Naive thymus-derived CD4-positive, alpha-beta T cell (primary cell): ENCODE measurements at regions of chr1 and their contacts with region 1.

Region 1: GRCh38 chr1:230167419-230167852 is 100.4 kb downstream of the GALNT2 start:
- DNase-seq: peak in 8 of 9 donors; percentile 21 to 50 (median 33)
- ATAC-seq: peak; percentile 77
- H3K4me3 ChIP-seq: no peak overlapping the region
- H3K4me3 Mint-ChIP-seq: peak overlapping the region in 2 of 10 donors; percentile 7 to 36
- H3K27ac ChIP-seq: no peak overlapping the region
- H3K27ac Mint-ChIP-seq: peak overlapping the region in 1 of 9 donors; percentile 48
- H3K4me1 ChIP-seq: no peaks in the 10 kb centered on the region
- H3K4me1 Mint-ChIP-seq: peaks cover 23 to 34% (median 31%) of the 10 kb centered on the region in 7 donors
- H3K27me3 ChIP-seq: no peaks in the 10 kb centered on the region
- H3K27me3 Mint-ChIP-seq: no peaks in the 10 kb centered on the region

Region 2: DNA sequence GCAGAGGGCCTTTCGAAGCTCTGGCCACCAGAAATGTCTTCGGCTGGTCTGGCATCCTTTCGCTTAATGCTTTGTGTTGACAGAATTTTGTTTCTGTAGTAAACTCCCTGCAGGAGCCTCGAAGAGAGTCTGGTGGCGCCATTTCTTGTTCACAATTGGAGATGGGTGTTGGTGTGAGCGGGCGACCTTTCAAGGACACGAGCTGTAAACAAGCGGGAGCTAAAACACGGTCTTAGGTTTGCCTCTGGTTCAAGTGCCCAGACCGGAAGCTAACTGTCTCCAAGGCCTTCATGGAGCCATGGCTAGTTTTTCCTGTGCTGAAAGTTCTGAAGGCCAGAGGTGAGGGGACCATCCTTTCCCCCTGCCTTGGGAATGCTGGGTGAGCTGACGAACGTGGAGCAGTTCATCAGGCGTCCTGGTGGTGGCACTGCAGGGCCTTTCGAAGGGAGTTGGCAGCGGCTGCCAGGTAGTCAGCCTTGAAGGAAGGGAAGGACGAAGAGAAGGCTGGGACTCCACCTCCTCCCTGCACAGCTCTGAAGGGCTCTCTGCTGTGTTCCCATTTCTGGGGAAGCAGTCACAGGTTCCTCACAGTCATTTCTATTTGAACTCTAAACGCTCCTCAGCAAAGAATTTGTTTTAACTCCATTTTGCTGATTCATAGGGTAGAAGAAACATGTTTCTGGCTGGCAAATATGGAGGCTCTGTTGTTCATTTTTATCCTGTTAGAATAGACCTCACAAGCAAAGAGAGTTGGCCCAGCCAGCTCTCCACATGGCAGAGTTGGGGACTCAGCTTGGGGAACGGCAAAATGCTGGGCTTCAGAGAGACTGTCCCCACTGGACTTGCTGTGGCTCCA is 506.2 kb before region 1 on chr1:
- CTCF ChIA-PET with region 1: interaction called, 40 read pairs
- POLR2A ChIA-PET with region 1: no interaction called
- intact Hi-C with region 1: loop called (anchors 1 kb)
- DNase-seq: peak; percentile 38 to 72 (median 67)
- ATAC-seq: peak; percentile 87
- H3K4me3 ChIP-seq: no peak overlapping the region
- H3K4me3 Mint-ChIP-seq: no peak overlapping the region
- H3K27ac ChIP-seq: no peak overlapping the region
- H3K27ac Mint-ChIP-seq: peak overlapping the region in 3 of 9 donors; percentile 8 to 80 (median 66)
- H3K4me1 ChIP-seq: peaks cover 13% of the 10 kb centered on the region in 2 donors
- H3K4me1 Mint-ChIP-seq: peaks cover 0 to 11% (median 5%) of the 10 kb centered on the region in 7 donors
- H3K27me3 ChIP-seq: no peaks in the 10 kb centered on the region
- H3K27me3 Mint-ChIP-seq: no peaks in the 10 kb centered on the region

Region 3: GRCh38 chr1:229856009-229856650 is 311.3 kb before region 1 on chr1:
- CTCF ChIA-PET with region 1: interaction called, 3 read pairs
- POLR2A ChIA-PET with region 1: no interaction called
- intact Hi-C with region 1: loop called in 1 of 2 experiments (anchors 10 kb)
- DNase-seq: peak in 5 of 9 donors; percentile 8 to 45 (median 30)
- ATAC-seq: peak; percentile 81
- H3K4me3 ChIP-seq: peak overlapping the region; percentile 40
- H3K4me3 Mint-ChIP-seq: peak overlapping the region; percentile 82 to 92 (median 90)
- H3K27ac ChIP-seq: peak overlapping the region; percentile 28
- H3K27ac Mint-ChIP-seq: peak overlapping the region; percentile 23 to 95 (median 83)
- H3K4me1 ChIP-seq: no peaks in the 10 kb centered on the region
- H3K4me1 Mint-ChIP-seq: peaks cover 5 to 14% (median 10%) of the 10 kb centered on the region in 7 donors
- H3K27me3 ChIP-seq: no peaks in the 10 kb centered on the region
- H3K27me3 Mint-ChIP-seq: peaks cover 0 to 5% (median 0%) of the 10 kb centered on the region in 5 donors

Region 4: GRCh38 chr1:229979993-229980392 is 187.4 kb before region 1 on chr1:
- CTCF ChIA-PET with region 1: no interaction called
- POLR2A ChIA-PET with region 1: no interaction called
- intact Hi-C with region 1: loop called (anchors 10 kb)
- DNase-seq: no peak
- ATAC-seq: no peak
- H3K4me3 ChIP-seq: no peak overlapping the region
- H3K4me3 Mint-ChIP-seq: no peak overlapping the region
- H3K27ac ChIP-seq: no peak overlapping the region
- H3K27ac Mint-ChIP-seq: no peak overlapping the region
- H3K4me1 ChIP-seq: no peaks in the 10 kb centered on the region
- H3K4me1 Mint-ChIP-seq: no peaks in the 10 kb centered on the region
- H3K27me3 ChIP-seq: no peaks in the 10 kb centered on the region
- H3K27me3 Mint-ChIP-seq: peaks cover 7 to 32% (median 17%) of the 10 kb centered on the region in 5 donors

Region 5: DNA sequence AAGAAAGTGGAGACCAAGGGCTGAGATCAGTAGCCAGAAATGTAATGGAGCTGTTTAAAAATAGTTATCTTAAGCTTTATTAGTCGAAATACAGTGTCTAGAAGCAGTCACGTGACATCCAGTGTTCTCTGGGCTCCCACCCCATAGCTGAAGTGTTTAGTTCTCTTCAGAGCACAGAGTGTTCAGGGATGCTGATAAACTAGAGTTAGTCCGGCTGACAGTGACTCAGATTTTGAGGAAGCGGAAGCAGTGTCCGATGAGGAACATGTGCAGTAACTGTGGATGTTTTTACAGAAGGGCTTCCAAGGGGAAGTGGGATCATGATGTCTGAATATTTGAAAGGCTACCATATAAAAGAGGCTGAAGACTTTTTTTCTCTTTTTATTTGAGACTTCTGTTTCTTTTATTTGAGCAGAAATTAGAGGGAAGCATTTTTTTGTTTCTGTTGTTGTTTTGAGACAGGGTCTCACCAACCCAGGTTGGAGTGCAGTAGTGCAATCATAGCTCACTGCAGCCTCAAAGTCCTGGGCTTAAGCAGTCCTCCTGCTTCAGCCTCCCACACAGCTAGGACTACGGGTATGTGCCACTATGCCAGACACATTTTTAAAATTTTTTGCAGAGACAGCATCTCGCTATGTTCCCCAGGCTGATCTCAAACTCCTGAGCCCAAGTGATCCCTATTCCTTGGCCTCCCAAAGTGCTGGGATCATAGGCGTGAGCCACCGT is 23.8 kb after region 1 on chr1:
- CTCF ChIA-PET with region 1: no interaction called
- POLR2A ChIA-PET with region 1: no interaction called
- intact Hi-C with region 1: no loop called
- DNase-seq: no peak
- ATAC-seq: peak; percentile 89
- H3K4me3 ChIP-seq: no peak overlapping the region
- H3K4me3 Mint-ChIP-seq: no peak overlapping the region
- H3K27ac ChIP-seq: no peak overlapping the region
- H3K27ac Mint-ChIP-seq: no peak overlapping the region
- H3K4me1 ChIP-seq: peaks cover 8 to 13% of the 10 kb centered on the region in 2 donors
- H3K4me1 Mint-ChIP-seq: peaks cover 25 to 50% (median 45%) of the 10 kb centered on the region in 7 donors
- H3K27me3 ChIP-seq: no peaks in the 10 kb centered on the region
- H3K27me3 Mint-ChIP-seq: no peaks in the 10 kb centered on the region

Region 6: DNA sequence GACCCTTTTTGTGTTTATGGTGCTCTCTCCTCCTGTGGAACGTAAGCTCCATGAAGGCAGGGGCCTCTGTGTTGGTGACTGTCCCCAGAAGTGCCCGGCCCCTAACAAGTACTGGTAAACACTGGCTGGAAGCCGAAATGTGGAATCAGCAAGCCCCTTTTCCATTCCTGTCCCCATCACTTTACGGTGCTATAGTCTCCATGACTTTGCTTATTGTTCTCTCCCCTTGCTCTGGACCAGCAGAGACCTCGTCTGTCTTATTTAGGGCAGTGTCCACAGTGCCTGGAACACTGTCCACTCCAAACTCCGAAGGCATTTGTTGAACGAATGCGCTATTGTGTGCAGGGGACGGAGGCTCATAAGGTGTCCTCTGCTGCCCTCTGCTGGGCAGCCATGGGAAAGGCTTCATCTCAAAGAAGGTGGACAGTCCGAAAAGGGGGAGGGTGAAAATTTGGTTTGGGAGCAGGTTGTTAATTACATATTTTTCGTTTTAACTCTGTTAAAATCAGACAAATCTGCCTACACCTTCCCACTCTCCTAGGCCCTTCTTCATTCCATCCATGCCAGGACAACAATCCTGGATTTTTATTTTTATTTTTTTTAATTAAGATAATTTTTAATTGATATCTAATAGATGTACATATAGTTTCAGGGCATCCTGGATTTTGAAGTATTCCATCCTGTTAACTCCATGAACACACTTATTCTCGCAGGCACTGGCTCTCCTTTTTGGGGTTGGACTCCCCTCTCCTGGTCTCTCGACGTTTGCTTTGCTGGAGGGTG is 143.1 kb after region 1 on chr1:
- CTCF ChIA-PET with region 1: no interaction called
- POLR2A ChIA-PET with region 1: no interaction called
- intact Hi-C with region 1: loop called (anchors 1 to 5 kb)
- DNase-seq: peak; percentile 25 to 70 (median 54)
- ATAC-seq: peak; percentile 87
- H3K4me3 ChIP-seq: no peak overlapping the region
- H3K4me3 Mint-ChIP-seq: peak overlapping the region in 2 of 10 donors; percentile 6 to 30
- H3K27ac ChIP-seq: no peak overlapping the region
- H3K27ac Mint-ChIP-seq: no peak overlapping the region
- H3K4me1 ChIP-seq: peaks cover 3% of the 10 kb centered on the region in 2 donors
- H3K4me1 Mint-ChIP-seq: peaks cover 4 to 10% (median 4%) of the 10 kb centered on the region in 7 donors
- H3K27me3 ChIP-seq: no peaks in the 10 kb centered on the region
- H3K27me3 Mint-ChIP-seq: peaks cover 5 to 19% (median 10%) of the 10 kb centered on the region in 5 donors